ENCODE measurements at regions of chr3 and their contacts with region 1.

Region 1: GRCh38 chr3:100463002-100463401 is 29.4 kb upstream of the TMEM45A start:
- DNase-seq: peak; percentile 38
- H3K4me3 ChIP-seq: no peak overlapping the region
- H3K27ac ChIP-seq: no peak overlapping the region
- H3K27me3 ChIP-seq: peaks cover 2% of the 10 kb centered on the region
- CTCF ChIP-seq: peak; percentile 77

Region 2: GRCh38 chr3:100113723-100114412 is 349.1 kb before region 1 on chr3:
- CTCF ChIA-PET with region 1: no interaction called
- POLR2A ChIA-PET with region 1: no interaction called
- DNase-seq: no peak
- H3K4me3 ChIP-seq: no peak overlapping the region
- H3K27ac ChIP-seq: no peak overlapping the region
- H3K27me3 ChIP-seq: no peaks in the 10 kb centered on the region
- CTCF ChIP-seq: no peak

Region 3: GRCh38 chr3:100429187-100429716 is 33.8 kb before region 1 on chr3:
- CTCF ChIA-PET with region 1: interaction called, 15 read pairs
- POLR2A ChIA-PET with region 1: interaction called, 3 read pairs
- DNase-seq: no peak
- H3K4me3 ChIP-seq: no peak overlapping the region
- H3K27ac ChIP-seq: no peak overlapping the region
- H3K27me3 ChIP-seq: no peaks in the 10 kb centered on the region
- CTCF ChIP-seq: no peak

Region 4: GRCh38 chr3:100577382-100578002 is 114.5 kb after region 1 on chr3:
- CTCF ChIA-PET with region 1: interaction called, 39 read pairs
- POLR2A ChIA-PET with region 1: no interaction called
- DNase-seq: no peak
- H3K4me3 ChIP-seq: no peak overlapping the region
- H3K27ac ChIP-seq: no peak overlapping the region
- H3K27me3 ChIP-seq: no peaks in the 10 kb centered on the region
- CTCF ChIP-seq: no peak

Region 5: GRCh38 chr3:100603469-100603868 is 140.5 kb after region 1 on chr3:
- CTCF ChIA-PET with region 1: interaction called, 23 read pairs
- POLR2A ChIA-PET with region 1: interaction called, 3 read pairs
- DNase-seq: no peak
- H3K4me3 ChIP-seq: no peak overlapping the region
- H3K27ac ChIP-seq: peak overlapping the region; percentile 21
- H3K27me3 ChIP-seq: peaks cover 2% of the 10 kb centered on the region
- CTCF ChIP-seq: peak; percentile 68

Region 6: DNA sequence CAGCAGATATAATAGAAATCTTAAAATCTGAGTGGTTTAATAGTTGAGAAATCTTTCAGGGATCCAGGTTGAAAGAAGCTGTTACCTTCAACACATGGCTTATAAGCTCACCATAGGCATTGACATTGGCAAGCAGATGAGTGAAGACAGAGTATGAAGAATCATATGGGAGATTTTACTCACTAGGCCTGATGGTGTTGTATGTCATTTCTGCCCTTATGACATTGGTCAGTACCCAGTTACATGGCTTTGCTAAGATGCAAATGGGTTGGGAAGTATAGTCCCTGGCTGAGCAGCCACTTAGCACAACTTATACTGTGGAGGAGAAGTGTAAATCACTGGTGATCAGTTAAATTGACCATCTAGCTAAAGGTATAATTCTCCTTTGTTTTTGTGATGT is 252.2 kb after region 1 on chr3:
- CTCF ChIA-PET with region 1: interaction called, 28 read pairs
- POLR2A ChIA-PET with region 1: no interaction called
- DNase-seq: no peak
- H3K4me3 ChIP-seq: no peak overlapping the region
- H3K27ac ChIP-seq: no peak overlapping the region
- H3K27me3 ChIP-seq: no peaks in the 10 kb centered on the region
- CTCF ChIP-seq: no peak

Region 7: DNA sequence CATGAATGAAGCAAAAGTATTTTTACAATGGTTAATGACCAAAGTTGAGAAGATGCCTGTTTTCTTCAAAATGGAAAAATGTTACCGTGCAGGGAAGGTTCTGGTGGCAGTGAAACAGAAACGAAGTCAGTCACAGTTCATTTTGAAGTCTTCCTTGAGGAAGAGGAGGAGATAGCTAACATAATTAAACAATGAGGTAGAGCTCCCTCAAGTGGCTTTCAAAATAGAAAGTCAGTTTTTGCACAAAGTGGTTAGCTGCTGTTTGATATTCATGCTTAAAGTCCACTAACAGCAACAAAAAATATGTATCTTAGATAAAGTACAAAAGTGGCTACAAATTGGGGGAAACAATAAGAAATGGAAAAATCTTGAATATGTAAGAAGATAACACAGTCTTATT is 333.6 kb after region 1 on chr3:
- CTCF ChIA-PET with region 1: interaction called, 18 read pairs
- POLR2A ChIA-PET with region 1: no interaction called
- DNase-seq: no peak
- H3K4me3 ChIP-seq: no peak overlapping the region
- H3K27ac ChIP-seq: no peak overlapping the region
- H3K27me3 ChIP-seq: no peaks in the 10 kb centered on the region
- CTCF ChIP-seq: peak; percentile 50